HEK293 (cell line): ENCODE measurements at regions of chr5 and their contacts with region 1.

Region 1: DNA sequence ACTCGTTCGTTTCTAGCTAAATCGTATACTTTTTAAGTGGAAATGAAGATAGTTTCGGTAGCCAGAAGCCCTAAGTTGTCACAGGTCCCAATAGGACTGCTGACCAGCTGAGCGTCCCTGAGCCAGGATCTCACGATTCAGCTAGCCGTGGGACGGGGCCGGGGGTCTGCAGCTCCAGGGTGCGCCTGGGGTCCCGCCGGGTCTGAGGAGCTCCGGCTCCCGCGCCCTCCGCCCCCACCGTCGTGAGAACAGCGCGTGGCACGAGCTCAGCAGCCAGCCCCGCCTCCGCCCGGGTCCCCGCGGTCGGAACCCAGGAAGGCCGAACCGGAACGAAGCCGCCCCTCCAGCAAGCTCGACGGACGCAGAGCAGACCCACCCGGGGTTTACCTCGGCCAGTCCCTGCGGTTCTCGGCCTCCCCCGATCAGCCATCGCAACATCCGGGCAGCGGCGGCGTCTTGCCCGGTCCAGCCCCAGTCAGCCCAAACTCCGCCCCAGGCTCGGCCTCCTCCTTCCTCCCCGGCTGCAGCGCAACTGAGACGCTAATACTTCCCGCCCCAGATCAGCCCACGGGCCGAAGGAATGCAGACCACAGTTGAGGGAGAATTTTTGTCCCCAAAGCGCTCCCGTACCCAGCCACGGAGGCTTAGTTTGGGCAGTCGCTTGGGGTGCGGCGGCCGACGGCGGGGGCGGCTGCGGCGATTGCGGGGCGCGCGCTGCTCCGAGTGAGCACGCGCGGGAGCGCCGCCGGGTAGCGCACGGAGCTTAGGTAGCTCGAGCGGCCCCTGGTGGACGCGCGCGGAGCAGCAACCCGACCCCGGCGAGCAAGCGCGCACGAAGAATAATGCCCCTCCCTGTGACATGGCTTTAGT is at the start of gene WDR41:
- H3K4me3 ChIP-seq: peak within 1 kb of the TSS; percentile 88
- H3K27ac ChIP-seq: peak within 1 kb of the TSS; percentile 90
- H3K4me1 ChIP-seq: peaks cover 5% of the 10 kb centered on the region; the same call in 1 of the 2 replicates
- CTCF ChIP-seq: peak; percentile 79

Region 2: GRCh38 chr5:77143998-77144836 is 347.8 kb before region 1 on chr5:
- CTCF ChIA-PET with region 1: interaction called, 27 read pairs
- POLR2A ChIA-PET with region 1: no interaction called
- H3K4me3 ChIP-seq: no peak overlapping the region
- H3K27ac ChIP-seq: no peak overlapping the region
- H3K4me1 ChIP-seq: no peaks in the 10 kb centered on the region
- CTCF ChIP-seq: peak; percentile 42; the same call in 1 of the 2 replicates

Region 3: GRCh38 chr5:77518304-77518703 is 26.3 kb after region 1 on chr5:
- CTCF ChIA-PET with region 1: interaction called, 23 read pairs
- POLR2A ChIA-PET with region 1: no interaction called
- H3K4me3 ChIP-seq: no peak overlapping the region
- H3K27ac ChIP-seq: no peak overlapping the region
- H3K4me1 ChIP-seq: no peaks in the 10 kb centered on the region
- CTCF ChIP-seq: no peak

Region 4: DNA sequence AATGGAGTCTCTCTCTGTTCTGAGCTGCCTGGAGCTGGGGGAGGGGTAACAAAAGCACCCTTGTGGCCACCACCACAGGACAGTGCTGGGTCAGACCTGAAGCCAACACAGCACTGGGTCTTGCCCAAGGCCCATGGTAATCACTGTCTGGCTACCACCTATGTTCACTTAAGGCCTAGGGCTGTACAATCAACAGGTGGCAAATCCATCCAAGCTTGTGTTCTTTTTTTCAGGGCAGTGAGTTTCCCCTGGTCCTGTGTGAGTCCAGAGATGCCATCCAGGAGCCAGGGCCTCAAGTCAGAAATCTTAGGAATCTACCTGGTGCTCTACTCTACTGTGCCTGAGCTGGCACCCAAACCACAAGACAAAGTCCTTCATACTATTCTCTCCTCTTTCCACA is 166.6 kb after region 1 on chr5:
- CTCF ChIA-PET with region 1: no interaction called
- POLR2A ChIA-PET with region 1: no interaction called
- H3K4me3 ChIP-seq: no peak overlapping the region
- H3K27ac ChIP-seq: no peak overlapping the region
- H3K4me1 ChIP-seq: no peaks in the 10 kb centered on the region
- CTCF ChIP-seq: no peak

Region 5: GRCh38 chr5:77775790-77776553 is 284.0 kb after region 1 on chr5 and contains the start of gene TBCA:
- CTCF ChIA-PET with region 1: no interaction called
- POLR2A ChIA-PET with region 1: no interaction called
- H3K4me3 ChIP-seq: peak within 1 kb of the TSS; percentile 92
- H3K27ac ChIP-seq: peak within 1 kb of the TSS; percentile 83
- H3K4me1 ChIP-seq: peaks cover 6% of the 10 kb centered on the region
- CTCF ChIP-seq: peak; percentile 96

Region 6: DNA sequence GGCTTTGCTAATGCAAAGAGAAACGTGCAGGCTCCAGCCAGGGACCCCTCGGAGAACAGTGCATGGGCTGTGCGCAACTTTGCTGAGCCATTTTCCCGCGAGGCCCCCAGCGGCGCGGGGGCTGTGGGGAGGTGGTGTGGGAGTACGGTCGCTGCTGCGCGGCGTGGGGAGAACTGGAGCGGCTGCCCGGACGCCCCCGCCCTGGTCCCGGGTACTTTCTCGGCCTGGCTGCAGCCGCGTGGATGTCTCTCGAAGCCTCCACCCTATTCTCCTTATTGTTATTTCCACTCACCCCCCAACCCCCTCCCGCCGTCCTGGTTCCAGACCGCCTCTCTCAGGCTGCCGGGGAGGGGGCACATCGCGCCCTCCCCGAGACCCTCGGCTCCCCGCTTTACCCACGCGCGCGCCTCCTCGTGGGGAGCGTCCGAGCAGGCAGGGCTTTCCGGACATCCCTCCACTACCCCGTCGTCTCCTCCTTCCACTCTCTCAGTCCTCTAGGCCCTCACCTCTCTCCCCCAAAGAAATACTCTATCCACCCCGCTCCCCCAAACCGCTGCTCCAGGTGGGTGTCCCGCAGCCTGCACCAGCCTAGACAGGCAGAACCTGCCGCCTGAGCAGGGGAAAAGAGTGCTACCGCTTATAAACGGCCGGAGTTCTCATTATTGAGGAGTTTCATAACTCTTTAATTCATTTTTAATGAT is 352.8 kb after region 1 on chr5:
- CTCF ChIA-PET with region 1: no interaction called
- POLR2A ChIA-PET with region 1: no interaction called
- H3K4me3 ChIP-seq: no peak overlapping the region
- H3K27ac ChIP-seq: no peak overlapping the region
- H3K4me1 ChIP-seq: no peaks in the 10 kb centered on the region
- CTCF ChIP-seq: no peak